Transverse colon (tissue), 4 donors: ENCODE measurements at regions of chr16 and their contacts with region 1.

Region 1: DNA sequence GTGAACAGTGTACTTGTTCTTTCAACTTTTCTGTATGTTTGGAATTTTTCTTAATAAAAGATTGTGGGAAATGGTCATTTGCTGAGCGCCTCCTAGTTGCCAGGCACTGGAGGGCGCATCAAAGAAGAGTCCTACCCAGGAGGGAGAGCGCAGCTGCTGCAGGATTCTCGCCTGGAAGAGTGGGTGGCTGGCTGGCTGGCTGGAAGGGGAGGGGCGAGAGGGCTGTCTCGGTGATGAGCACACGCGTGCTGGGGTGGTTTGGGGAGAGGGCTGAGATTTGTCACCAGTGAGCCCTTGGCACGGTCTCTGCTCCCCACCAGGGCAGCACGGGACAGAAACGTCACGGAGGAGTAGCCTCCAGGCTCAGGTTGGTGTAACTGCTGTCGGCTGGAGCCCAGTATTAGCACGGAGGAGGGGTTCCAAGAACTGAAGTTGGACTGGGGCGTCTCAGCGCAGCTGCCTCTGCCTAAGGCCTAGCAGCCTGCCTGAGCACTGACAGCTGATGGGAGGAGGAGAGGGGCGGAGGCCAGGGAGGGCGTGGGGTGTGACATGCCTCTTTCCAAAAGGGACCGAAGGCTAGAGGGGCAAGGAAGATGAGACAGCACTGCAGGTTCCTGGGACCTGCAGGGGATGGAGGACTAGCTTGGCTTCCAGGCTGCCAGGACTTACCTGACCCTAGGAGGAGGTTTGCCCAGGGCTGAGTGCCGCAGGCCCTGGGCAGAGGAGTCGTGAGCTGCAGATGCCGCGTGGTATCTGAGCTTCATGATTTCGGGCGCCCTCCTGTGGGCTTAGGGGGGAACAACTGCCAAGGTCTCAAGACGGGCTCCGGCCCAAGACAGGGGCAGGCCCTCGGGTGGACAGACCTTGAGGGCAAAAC is 5.7 kb downstream of the LDHD start:
- DNase-seq: peak; percentile 94
- H3K4me3 ChIP-seq: peak overlapping the region in 2 of 4 donors; percentile 0 to 19
- H3K27ac ChIP-seq: peak overlapping the region; percentile 69 to 90 (median 80)
- H3K4me1 ChIP-seq: peaks cover 45 to 71% (median 48%) of the 10 kb centered on the region in 4 donors
- H3K27me3 ChIP-seq: no peaks in the 10 kb centered on the region
- CTCF ChIP-seq: peak; percentile 89 to 96 (median 94)
- EP300 ChIP-seq: no peak
- POLR2A ChIP-seq: peak; percentile 17

Region 2: GRCh38 chr16:74709441-74709877 is 401.4 kb before region 1 on chr16:
- in situ Hi-C with region 1: loop called in 1 of 4 experiments (anchors 25 kb)
- intact Hi-C with region 1: no loop called
- DNase-seq: peak; percentile 87
- H3K4me3 ChIP-seq: no peak overlapping the region
- H3K27ac ChIP-seq: no peak overlapping the region
- H3K4me1 ChIP-seq: peaks cover 0 to 5% (median 0%) of the 10 kb centered on the region in 4 donors
- H3K27me3 ChIP-seq: no peaks in the 10 kb centered on the region
- CTCF ChIP-seq: peak; percentile 93 to 98 (median 95)
- EP300 ChIP-seq: no peak
- POLR2A ChIP-seq: no peak

Region 3: GRCh38 chr16:74998481-74999218 is 112.2 kb before region 1 on chr16 and contains the start of gene ZNRF1:
- in situ Hi-C with region 1: loop called (anchors 5 to 10 kb)
- intact Hi-C with region 1: loop called (anchors 1 kb)
- DNase-seq: peak; percentile 88
- H3K4me3 ChIP-seq: peak within 1 kb of the TSS; percentile 77 to 97 (median 95)
- H3K27ac ChIP-seq: peak within 1 kb of the TSS; percentile 84 to 91 (median 88)
- H3K4me1 ChIP-seq: peaks cover 0 to 29% (median 21%) of the 10 kb centered on the region in 4 donors
- H3K27me3 ChIP-seq: no peaks in the 10 kb centered on the region
- CTCF ChIP-seq: peak; percentile 79 to 94 (median 85)
- EP300 ChIP-seq: no peak
- POLR2A ChIP-seq: no peak
- total RNA-seq, gene ZNRF1: 28.5 to 58.4 (median 40.4) TPM